ENCODE measurements at regions of chr13 and their contacts with region 1.

Region 1: GRCh38 chr13:53189162-53189561 is 160.5 kb downstream of the OLFM4 start:
- DNase-seq: no peak
- ATAC-seq: no peak
- H3K4me3 ChIP-seq: no peak overlapping the region
- H3K27ac ChIP-seq: no peak overlapping the region
- H3K4me1 ChIP-seq: no peaks in the 10 kb centered on the region
- H3K27me3 ChIP-seq: no peaks in the 10 kb centered on the region
- CTCF ChIP-seq: no peak
- POLR2A ChIP-seq: no peak
- RAD21 ChIP-seq: no peak

Region 2: GRCh38 chr13:52652196-52652979 is 536.8 kb before region 1 on chr13 and contains the start of gene SUGT1:
- CTCF ChIA-PET with region 1: no interaction called
- POLR2A ChIA-PET with region 1: interaction called, 15 read pairs
- dilution Hi-C with region 1: no loop called
- in situ Hi-C with region 1: no loop called
- intact Hi-C with region 1: no loop called
- DNase-seq: peak; percentile 97
- ATAC-seq: peak; percentile 97
- H3K4me3 ChIP-seq: peak within 1 kb of the TSS; percentile 93
- H3K27ac ChIP-seq: peak within 1 kb of the TSS; percentile 96
- H3K4me1 ChIP-seq: peaks cover 2% of the 10 kb centered on the region; the same call in 1 of the 2 replicates
- H3K27me3 ChIP-seq: no peaks in the 10 kb centered on the region
- CTCF ChIP-seq: peak; percentile 68
- POLR2A ChIP-seq: peak; percentile 91
- RAD21 ChIP-seq: peak; percentile 42
- total RNA-seq, gene SUGT1: 21.5 and 41.4 TPM in 2 replicates

Region 3: GRCh38 chr13:52868190-52868589 is 321.0 kb before region 1 on chr13:
- CTCF ChIA-PET with region 1: no interaction called
- POLR2A ChIA-PET with region 1: no interaction called
- dilution Hi-C with region 1: no loop called
- in situ Hi-C with region 1: no loop called
- intact Hi-C with region 1: no loop called
- DNase-seq: no peak
- ATAC-seq: no peak
- H3K4me3 ChIP-seq: no peak overlapping the region
- H3K27ac ChIP-seq: no peak overlapping the region
- H3K4me1 ChIP-seq: no peaks in the 10 kb centered on the region
- H3K27me3 ChIP-seq: no peaks in the 10 kb centered on the region
- CTCF ChIP-seq: no peak
- POLR2A ChIP-seq: no peak
- RAD21 ChIP-seq: no peak

Region 4: GRCh38 chr13:53159430-53159829 is 29.7 kb before region 1 on chr13:
- CTCF ChIA-PET with region 1: no interaction called
- POLR2A ChIA-PET with region 1: no interaction called
- dilution Hi-C with region 1: no loop called
- in situ Hi-C with region 1: no loop called
- intact Hi-C with region 1: no loop called
- DNase-seq: no peak
- ATAC-seq: no peak
- H3K4me3 ChIP-seq: no peak overlapping the region
- H3K27ac ChIP-seq: no peak overlapping the region
- H3K4me1 ChIP-seq: no peaks in the 10 kb centered on the region
- H3K27me3 ChIP-seq: no peaks in the 10 kb centered on the region
- CTCF ChIP-seq: no peak
- POLR2A ChIP-seq: no peak
- RAD21 ChIP-seq: no peak

Region 5: DNA sequence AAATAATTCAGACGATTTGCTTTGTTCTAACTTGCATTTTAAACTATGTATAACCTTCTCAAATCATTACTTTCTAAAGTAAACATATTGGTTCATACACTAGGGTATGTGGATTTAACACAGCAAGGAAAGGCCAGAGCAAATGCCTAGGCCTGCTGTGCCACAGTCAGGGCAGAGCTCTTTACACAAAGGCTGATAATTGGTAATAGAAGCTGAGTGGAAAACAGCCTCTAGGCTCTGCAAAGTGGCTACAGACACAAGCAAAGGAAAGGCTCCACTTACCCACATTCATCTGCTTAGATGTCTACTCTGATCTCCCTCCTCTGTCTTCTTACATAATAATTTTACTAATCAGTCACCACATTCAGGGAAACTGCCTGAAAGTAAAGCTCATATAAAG is 222.3 kb after region 1 on chr13:
- CTCF ChIA-PET with region 1: no interaction called
- POLR2A ChIA-PET with region 1: no interaction called
- dilution Hi-C with region 1: no loop called
- in situ Hi-C with region 1: no loop called
- intact Hi-C with region 1: no loop called
- DNase-seq: no peak
- ATAC-seq: no peak
- H3K4me3 ChIP-seq: no peak overlapping the region
- H3K27ac ChIP-seq: no peak overlapping the region
- H3K4me1 ChIP-seq: no peaks in the 10 kb centered on the region
- H3K27me3 ChIP-seq: no peaks in the 10 kb centered on the region
- CTCF ChIP-seq: no peak
- POLR2A ChIP-seq: no peak
- RAD21 ChIP-seq: no peak

Measured in IMR-90 (cell line).